GM13977 (cell line): ENCODE measurements at regions of chr12 and their contacts with region 1.

Region 1: DNA sequence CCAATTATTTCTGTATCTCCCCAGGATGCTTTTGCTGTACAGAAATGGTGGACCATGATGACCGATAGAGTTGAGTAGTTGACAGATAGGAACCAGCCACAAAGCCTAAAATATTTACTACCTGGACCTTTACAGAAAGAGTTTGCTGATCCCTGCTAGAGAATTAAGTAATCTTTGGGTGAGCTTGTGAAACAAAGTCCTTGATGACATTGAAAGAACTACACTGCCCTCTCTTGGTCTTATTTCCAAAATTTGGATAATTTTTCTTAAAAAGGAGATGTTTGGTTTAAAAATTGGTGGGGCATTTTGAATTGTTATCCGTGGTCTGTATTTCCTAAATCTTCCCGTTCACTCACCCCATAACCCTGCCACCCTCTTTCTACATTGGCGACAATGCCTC is 13.7 kb upstream of the TCTN1 start:
- DNase-seq: peak; percentile 48
- CTCF ChIP-seq: peak; percentile 50

Region 2: DNA sequence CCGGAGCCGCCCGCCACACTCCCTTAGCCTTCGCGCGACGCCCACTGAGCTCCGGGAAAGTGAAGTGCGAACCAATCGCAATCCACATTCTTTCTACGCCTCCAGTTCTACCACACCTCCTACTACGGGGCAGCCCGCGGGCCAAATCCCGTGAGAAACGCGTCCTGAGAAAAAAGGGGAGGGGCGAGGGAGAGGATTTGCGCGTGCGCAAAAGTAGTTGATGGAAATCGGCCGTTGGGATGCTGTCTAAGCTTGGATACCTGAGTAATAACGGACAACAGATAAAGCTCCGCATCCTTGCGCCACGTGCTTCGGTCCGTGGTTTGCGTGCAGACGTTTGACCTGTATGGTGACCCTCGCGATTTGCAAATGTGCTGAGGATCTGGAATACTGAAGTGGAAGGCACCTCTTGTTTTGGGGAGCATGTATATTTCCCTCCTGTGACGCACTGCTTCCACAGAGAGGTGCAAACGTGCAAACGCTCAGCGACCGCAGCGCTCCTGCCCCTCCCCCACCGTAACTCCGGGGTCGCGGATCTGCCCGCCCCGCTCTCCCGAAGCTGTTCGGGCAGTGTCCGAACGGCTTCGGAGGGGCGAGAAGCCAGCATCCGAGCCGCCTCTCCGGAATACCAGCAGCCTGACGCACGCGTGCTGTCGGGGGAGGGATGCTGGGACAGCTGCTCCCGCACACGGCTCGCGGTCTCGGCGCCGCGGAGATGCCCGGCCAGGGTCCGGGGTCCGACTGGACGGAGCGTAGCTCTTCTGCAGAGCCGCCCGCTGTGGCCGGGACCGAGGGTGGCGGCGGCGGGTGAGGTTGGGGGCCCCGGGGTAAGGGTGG is 131.8 kb before region 1 on chr12 and contains the starts of genes FAM216A and GPN3:
- in situ Hi-C with region 1: loop called (anchors 10 kb)
- DNase-seq: peak; percentile 94
- CTCF ChIP-seq: peak; percentile 6

Region 3: DNA sequence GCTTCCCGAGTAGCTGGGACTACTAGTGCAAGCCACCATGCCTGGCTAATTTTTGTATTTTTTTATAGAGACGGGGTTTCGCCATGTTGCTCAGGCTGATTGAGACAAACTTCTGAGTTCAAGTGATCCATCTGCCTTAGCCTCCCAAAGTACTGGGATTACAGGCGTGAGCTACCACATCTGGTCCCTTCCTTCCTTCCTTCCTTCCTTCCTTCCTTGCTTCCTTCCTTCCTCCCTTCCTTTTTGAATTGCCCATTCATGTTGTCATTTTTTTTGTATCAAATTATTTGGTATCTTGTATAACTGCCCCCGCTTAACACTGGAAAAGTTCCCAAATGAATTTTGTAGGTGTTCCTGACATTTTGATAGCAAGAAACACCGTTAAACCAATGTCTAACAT is 86.4 kb before region 1 on chr12:
- in situ Hi-C with region 1: loop called (anchors 5 kb)
- DNase-seq: no peak
- CTCF ChIP-seq: no peak